ENCODE measurements at regions of chr3 and their contacts with region 1.

Region 1: GRCh38 chr3:129536804-129537203 is 6.2 kb upstream of the H1-8 start:
- DNase-seq: no peak
- ATAC-seq: no peak
- H3K4me3 ChIP-seq: no peak overlapping the region
- H3K4me3 Mint-ChIP-seq: no peak overlapping the region
- H3K27ac ChIP-seq: no peak overlapping the region
- H3K27ac Mint-ChIP-seq: no peak overlapping the region
- H3K4me1 ChIP-seq: no peaks in the 10 kb centered on the region
- H3K4me1 Mint-ChIP-seq: no peaks in the 10 kb centered on the region
- H3K27me3 ChIP-seq: peaks cover 0 to 9% of the 10 kb centered on the region in 2 experiments
- H3K27me3 Mint-ChIP-seq: no peaks in the 10 kb centered on the region

Region 2: GRCh38 chr3:128487813-128488635 is 1048.8 kb before region 1 on chr3:
- CTCF ChIA-PET with region 1: no interaction called
- POLR2A ChIA-PET with region 1: no interaction called
- DNase-seq: peak in 2 of 35 experiments; percentile 20 to 34
- ATAC-seq: peak; percentile 15 to 31 (median 18)
- H3K4me3 ChIP-seq: peak overlapping the region; percentile 34 to 64
- H3K4me3 Mint-ChIP-seq: peak overlapping the region; percentile 50 to 85 (median 81)
- H3K27ac ChIP-seq: no peak overlapping the region
- H3K27ac Mint-ChIP-seq: no peak overlapping the region
- H3K4me1 ChIP-seq: peaks cover 10 to 81% of the 10 kb centered on the region in 2 experiments
- H3K4me1 Mint-ChIP-seq: peaks cover 43 to 55% (median 48%) of the 10 kb centered on the region in 3 donors
- H3K27me3 ChIP-seq: peaks cover 0 to 98% of the 10 kb centered on the region in 2 experiments
- H3K27me3 Mint-ChIP-seq: peaks cover 44 to 76% of the 10 kb centered on the region in 2 donors

Region 3: DNA sequence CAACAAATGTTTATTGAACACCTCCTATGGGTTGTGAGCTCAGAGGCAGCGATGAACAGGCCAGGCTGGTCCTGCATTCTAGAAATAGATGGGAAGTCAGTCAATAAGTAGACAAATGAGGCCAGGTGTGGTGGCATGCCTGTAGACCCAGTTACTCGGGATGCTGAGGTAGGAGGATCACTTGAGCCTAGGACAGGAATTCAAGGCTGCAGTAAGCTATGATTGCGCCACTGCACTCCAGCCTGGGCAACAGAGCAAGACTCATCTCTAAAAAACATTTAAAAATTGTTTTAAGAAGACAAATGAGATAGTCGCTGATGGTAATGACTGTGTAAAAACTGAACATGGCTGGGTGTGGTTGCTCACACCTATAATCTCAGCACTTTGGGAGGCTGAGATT is 12.7 kb before region 1 on chr3:
- CTCF ChIA-PET with region 1: no interaction called
- POLR2A ChIA-PET with region 1: interaction called in 1 of 2 experiments, 17 read pairs
- DNase-seq: no peak
- ATAC-seq: no peak
- H3K4me3 ChIP-seq: no peak overlapping the region
- H3K4me3 Mint-ChIP-seq: no peak overlapping the region
- H3K27ac ChIP-seq: no peak overlapping the region
- H3K27ac Mint-ChIP-seq: no peak overlapping the region
- H3K4me1 ChIP-seq: no peaks in the 10 kb centered on the region
- H3K4me1 Mint-ChIP-seq: no peaks in the 10 kb centered on the region
- H3K27me3 ChIP-seq: no peaks in the 10 kb centered on the region
- H3K27me3 Mint-ChIP-seq: no peaks in the 10 kb centered on the region